ENCODE measurements at regions of chr12 and their contacts with region 1.

Region 1: GRCh38 chr12:93938317-93938716 is 210.1 kb upstream of the PLXNC1 start:
- DNase-seq: no peak
- H3K4me3 Mint-ChIP-seq: no peak overlapping the region
- H3K27ac Mint-ChIP-seq: no peak overlapping the region
- H3K4me1 Mint-ChIP-seq: no peaks in the 10 kb centered on the region
- H3K27me3 Mint-ChIP-seq: peaks cover 13% of the 10 kb centered on the region
- CTCF ChIP-seq: no peak

Region 2: DNA sequence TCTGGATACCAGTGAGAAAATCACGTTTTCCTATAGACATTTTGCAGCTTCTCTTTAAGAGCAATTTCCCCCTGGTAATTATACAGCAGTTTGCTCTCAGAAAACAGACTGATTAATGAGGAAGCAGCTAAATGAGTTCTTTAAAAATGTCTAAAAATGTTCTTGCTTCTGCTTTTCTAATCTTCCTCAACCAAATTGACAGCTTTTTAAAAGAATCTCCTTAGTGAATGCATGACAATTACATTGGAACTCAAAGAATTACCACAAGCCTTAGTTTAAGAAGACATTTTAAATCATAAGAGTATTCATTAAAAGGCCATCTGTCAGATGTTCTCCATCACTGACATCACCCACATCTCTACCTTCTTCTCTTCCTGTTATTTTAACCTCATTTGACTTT is 74.3 kb after region 1 on chr12:
- CTCF ChIA-PET with region 1: no interaction called
- intact Hi-C with region 1: no loop called
- DNase-seq: no peak
- H3K4me3 Mint-ChIP-seq: no peak overlapping the region
- H3K27ac Mint-ChIP-seq: no peak overlapping the region
- H3K4me1 Mint-ChIP-seq: no peaks in the 10 kb centered on the region
- H3K27me3 Mint-ChIP-seq: no peaks in the 10 kb centered on the region
- CTCF ChIP-seq: no peak

Region 3: DNA sequence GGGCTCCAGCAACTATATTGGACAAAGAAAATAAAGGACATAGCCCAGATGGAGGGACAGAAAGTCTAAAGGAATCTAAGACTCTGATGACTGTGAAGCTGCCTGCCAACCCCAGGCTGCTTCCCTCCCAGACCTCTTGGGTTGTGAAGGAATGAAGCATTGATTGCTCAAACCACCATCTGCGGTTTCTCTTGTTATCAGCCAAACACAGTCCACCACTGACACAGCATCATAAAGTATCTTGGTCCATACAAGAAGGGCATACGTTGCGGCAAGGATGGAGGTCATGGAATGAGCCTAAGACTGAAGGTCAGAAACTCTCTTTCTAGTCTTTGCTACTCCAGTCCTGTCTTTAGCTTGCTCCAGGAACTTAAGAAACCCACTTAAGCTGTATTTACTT is 151.6 kb after region 1 on chr12:
- CTCF ChIA-PET with region 1: interaction called, 11 read pairs
- intact Hi-C with region 1: no loop called
- DNase-seq: no peak
- H3K4me3 Mint-ChIP-seq: no peak overlapping the region
- H3K27ac Mint-ChIP-seq: no peak overlapping the region
- H3K4me1 Mint-ChIP-seq: no peaks in the 10 kb centered on the region
- H3K27me3 Mint-ChIP-seq: peaks cover 46% of the 10 kb centered on the region
- CTCF ChIP-seq: no peak